Panc1 (cell line): ENCODE measurements at regions of chr22 and their contacts with region 1.

Region 1: DNA sequence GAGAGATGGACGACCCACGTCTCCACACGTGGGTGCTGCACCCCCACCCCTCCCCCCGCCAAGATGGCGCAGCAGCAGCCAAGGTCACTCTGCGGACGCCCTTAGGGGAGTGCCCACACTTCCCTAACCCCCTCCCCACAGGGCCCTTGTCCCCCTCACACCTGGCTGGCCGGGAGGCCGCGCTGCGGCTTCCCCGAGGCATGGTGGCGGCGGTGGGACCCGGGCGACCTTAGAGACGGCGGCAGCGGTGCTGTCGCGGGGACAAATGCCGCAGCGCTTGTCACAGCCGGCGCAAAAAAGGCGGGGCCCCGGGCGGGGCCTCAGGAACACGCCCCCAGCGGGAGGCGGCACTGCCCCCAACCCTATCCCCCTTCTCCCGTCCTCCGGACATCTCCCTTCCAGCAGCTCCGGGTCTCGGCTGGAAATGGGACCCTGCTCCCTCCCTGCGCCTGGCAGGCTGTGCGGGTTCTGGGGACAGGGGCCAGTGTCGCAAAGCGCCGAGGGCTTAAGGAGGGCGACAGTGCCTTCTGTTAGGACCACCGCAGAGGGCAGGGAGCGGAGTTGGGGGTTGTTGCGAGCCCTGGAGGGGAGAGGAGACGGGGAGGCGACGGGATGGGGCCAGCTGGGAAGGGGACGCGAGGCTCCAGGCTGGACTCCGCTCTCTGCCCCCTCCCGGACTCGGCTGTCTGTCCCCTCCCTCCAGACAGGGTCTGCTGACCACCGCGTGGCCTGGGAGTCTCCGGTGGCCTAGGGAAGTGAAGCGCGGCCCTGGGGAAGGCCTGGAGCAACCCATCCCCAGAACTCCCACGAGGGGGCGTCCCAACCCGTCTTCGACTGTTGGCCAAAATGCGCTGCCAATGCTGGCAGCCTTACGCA is at the start of gene CHCHD10:
- DNase-seq: peak; percentile 18
- ATAC-seq: peak; percentile 86
- H3K4me3 ChIP-seq: peak within 1 kb of the TSS; percentile 60 to 65
- H3K27ac ChIP-seq: peak within 1 kb of the TSS; percentile 75
- H3K4me1 ChIP-seq: 0 out of 2 replicates have a peak, but pooled peaks cover 5% of the 10 kb centered on the region
- H3K27me3 ChIP-seq: no peaks in the 10 kb centered on the region
- CTCF ChIP-seq: peak; percentile 85
- total RNA-seq, gene CHCHD10: 84.4 TPM

Region 2: GRCh38 chr22:23500508-23501260 is 267.2 kb before region 1 on chr22:
- CTCF ChIA-PET with region 1: no interaction called
- POLR2A ChIA-PET with region 1: no interaction called
- in situ Hi-C with region 1: no loop called
- intact Hi-C with region 1: no loop called
- DNase-seq: no peak
- ATAC-seq: no peak
- H3K4me3 ChIP-seq: no peak overlapping the region
- H3K27ac ChIP-seq: no peak overlapping the region
- H3K4me1 ChIP-seq: no peaks in the 10 kb centered on the region
- H3K27me3 ChIP-seq: no peaks in the 10 kb centered on the region
- CTCF ChIP-seq: no peak

Region 3: GRCh38 chr22:23849009-23850006 is 81.4 kb after region 1 on chr22:
- CTCF ChIA-PET with region 1: interaction called, 7 read pairs
- POLR2A ChIA-PET with region 1: no interaction called
- in situ Hi-C with region 1: no loop called
- intact Hi-C with region 1: loop called (anchors 10 kb)
- DNase-seq: no peak
- ATAC-seq: peak; percentile 91
- H3K4me3 ChIP-seq: peak overlapping the region; percentile 32 to 47
- H3K27ac ChIP-seq: no peak overlapping the region
- H3K4me1 ChIP-seq: no peaks in the 10 kb centered on the region; the same call in none of the 2 replicates
- H3K27me3 ChIP-seq: no peaks in the 10 kb centered on the region
- CTCF ChIP-seq: peak; percentile 94

Region 4: GRCh38 chr22:23857606-23858483 is 89.9 kb after region 1 on chr22 and contains the start of gene SLC2A11:
- CTCF ChIA-PET with region 1: interaction called, 10 read pairs
- POLR2A ChIA-PET with region 1: no interaction called
- in situ Hi-C with region 1: no loop called
- intact Hi-C with region 1: no loop called
- DNase-seq: peak; percentile 82
- ATAC-seq: peak; percentile 95
- H3K4me3 ChIP-seq: peak within 1 kb of the TSS; percentile 74 to 94
- H3K27ac ChIP-seq: peak within 1 kb of the TSS; percentile 86
- H3K4me1 ChIP-seq: peaks cover 7% of the 10 kb centered on the region
- H3K27me3 ChIP-seq: no peaks in the 10 kb centered on the region
- CTCF ChIP-seq: no peak; the same call in 1 of the 2 replicates
- total RNA-seq, gene SLC2A11: 33.8 TPM

Region 5: GRCh38 chr22:24494528-24495364 is 726.8 kb after region 1 on chr22 and contains the start of gene UPB1:
- CTCF ChIA-PET with region 1: no interaction called
- POLR2A ChIA-PET with region 1: no interaction called
- in situ Hi-C with region 1: no loop called
- intact Hi-C with region 1: no loop called
- DNase-seq: no peak
- ATAC-seq: no peak
- H3K4me3 ChIP-seq: no peak within 1 kb of the TSS
- H3K27ac ChIP-seq: no peak within 1 kb of the TSS
- H3K4me1 ChIP-seq: no peaks in the 10 kb centered on the region
- H3K27me3 ChIP-seq: no peaks in the 10 kb centered on the region
- CTCF ChIP-seq: no peak
- total RNA-seq, gene UPB1: 0.10 TPM